ENCODE measurements at regions of chr13 and their contacts with region 1.

Region 1: GRCh38 chr13:110600261-110600819 is 15.0 kb upstream of the NAXD start:
- DNase-seq: no peak
- ATAC-seq: no peak

Region 2: GRCh38 chr13:110575322-110576069 is 24.8 kb before region 1 on chr13:
- intact Hi-C with region 1: no loop called
- DNase-seq: peak; percentile 58
- ATAC-seq: peak; percentile 61

Region 3: DNA sequence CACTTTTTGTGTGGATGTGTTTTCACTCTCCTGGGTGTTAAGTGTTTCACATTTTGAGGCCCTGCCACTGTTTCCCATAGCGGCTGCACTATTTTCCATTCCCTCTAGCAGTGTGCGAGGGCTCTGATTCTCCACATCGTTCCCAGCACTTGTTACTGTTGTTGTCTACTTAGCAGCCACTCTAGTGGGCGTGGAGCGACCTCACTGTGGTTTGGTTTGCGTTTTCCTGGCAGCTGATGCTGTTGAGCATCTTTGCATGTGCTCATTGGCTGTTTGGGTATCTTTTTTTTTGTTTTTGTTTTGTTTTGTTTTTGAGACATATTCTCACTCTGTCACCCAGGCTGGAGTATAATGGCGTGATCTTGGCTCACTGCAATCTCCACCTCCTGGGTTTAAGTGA is 29.4 kb after region 1 on chr13:
- intact Hi-C with region 1: loop called (anchors 2 kb)
- DNase-seq: peak; percentile 33
- ATAC-seq: no peak

Measured in sciatic nerve (tissue), 2 donors.